ENCODE measurements at regions of chr17 and their contacts with region 1.

Region 1: DNA sequence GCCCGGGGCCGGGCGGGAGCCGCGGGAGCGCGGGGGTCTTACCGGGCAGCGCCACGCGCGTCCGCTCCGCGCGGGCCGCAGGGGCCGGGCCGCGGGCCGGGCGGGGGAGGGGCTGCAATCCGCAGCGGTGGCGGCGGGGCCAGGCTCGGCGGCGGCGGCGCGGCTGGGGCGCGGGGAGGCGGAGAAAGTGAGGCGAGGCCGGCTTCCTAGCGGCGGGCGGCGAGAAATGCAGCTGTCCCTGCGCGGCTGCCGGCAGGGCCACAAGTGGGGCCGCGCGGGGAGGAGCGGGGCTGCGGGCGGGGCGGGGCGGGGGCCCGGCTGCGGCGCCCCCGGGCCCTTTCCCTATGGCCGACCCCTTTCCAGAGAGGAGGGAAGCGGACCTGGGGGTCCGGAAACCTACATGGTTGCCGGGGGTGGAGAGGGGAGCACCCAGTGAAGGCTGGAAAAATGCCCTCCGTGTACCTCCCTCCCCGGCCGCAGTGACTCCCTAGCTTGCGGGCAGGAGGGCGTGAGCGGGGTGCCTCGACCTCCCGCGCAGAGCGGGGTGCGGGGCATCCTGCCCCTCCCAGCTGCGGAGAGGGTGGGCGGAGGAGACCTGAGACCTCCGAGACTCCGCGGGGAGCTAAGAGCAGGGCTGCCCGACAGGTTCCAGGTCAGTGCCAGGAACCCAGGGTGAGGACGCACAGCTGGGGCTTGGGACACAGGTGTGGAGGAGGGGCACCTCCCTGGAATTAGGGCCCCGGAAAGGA is at the start of gene CUEDC1:
- H3K4me3 ChIP-seq: peak within 1 kb of the TSS; percentile 52
- H3K27ac ChIP-seq: peak within 1 kb of the TSS; percentile 98
- H3K4me1 ChIP-seq: peaks cover 40% of the 10 kb centered on the region
- CTCF ChIP-seq: no peak

Region 2: GRCh38 chr17:57849874-57850754 is 105.2 kb before region 1 on chr17 and contains the start of gene MRPS23:
- CTCF ChIA-PET with region 1: interaction called, 3 read pairs
- POLR2A ChIA-PET with region 1: interaction called, 10 read pairs
- H3K4me3 ChIP-seq: peak within 1 kb of the TSS; percentile 99
- H3K27ac ChIP-seq: peak within 1 kb of the TSS; percentile 84
- H3K4me1 ChIP-seq: peaks cover 17% of the 10 kb centered on the region
- CTCF ChIP-seq: no peak

Region 3: DNA sequence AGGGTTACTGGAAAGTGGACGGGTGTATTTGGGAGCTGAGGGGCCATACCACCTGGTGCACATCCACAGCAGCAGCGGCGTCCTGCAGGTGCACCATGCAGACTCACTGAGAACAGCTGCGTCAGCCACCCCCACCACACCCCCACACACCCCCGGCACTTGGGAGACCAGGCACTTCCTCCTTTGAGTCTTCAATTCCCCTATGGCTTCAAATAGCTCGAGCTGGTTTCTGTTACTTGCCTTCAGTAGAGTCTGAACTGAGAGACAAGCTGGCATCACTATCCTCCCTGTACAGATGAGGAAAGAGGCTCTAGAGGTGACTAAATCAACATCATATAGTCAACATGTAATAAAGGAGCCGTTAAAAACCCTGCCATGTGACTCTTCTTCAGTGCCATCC is 15.6 kb before region 1 on chr17:
- CTCF ChIA-PET with region 1: interaction called, 9 read pairs
- POLR2A ChIA-PET with region 1: interaction called, 33 read pairs
- H3K4me3 ChIP-seq: no peak overlapping the region
- H3K27ac ChIP-seq: no peak overlapping the region
- H3K4me1 ChIP-seq: peaks cover 49% of the 10 kb centered on the region
- CTCF ChIP-seq: no peak

Measured in HEK293 (cell line).